Activated T-helper 1 cell treated with anti-CD3 and anti-CD28 coated beads, Interleukin-12 subunit alpha, Interleukin-12 subunit beta, Interleukin-2, Interleukin-4 antibody, amounts not matched to agents 30 ng/mL and 10 ng/mL and 1 ng/mL, durations not matched to agents 14 hours and 24 hours and 36 hours (primary cell): ENCODE measurements at regions of chr12 and their contacts with region 1.

Region 1: GRCh38 chr12:105330283-105330930 is at the start of gene C12orf75:
- DNase-seq: peak; percentile 93
- H3K4me3 Mint-ChIP-seq: peak within 1 kb of the TSS; percentile 87
- H3K27ac Mint-ChIP-seq: peak within 1 kb of the TSS; percentile 91
- H3K4me1 Mint-ChIP-seq: peaks cover 83% of the 10 kb centered on the region
- H3K27me3 Mint-ChIP-seq: no peaks in the 10 kb centered on the region
- total RNA-seq, gene C12orf75: 87.8 and 93.4 TPM in 2 replicates

Region 2: DNA sequence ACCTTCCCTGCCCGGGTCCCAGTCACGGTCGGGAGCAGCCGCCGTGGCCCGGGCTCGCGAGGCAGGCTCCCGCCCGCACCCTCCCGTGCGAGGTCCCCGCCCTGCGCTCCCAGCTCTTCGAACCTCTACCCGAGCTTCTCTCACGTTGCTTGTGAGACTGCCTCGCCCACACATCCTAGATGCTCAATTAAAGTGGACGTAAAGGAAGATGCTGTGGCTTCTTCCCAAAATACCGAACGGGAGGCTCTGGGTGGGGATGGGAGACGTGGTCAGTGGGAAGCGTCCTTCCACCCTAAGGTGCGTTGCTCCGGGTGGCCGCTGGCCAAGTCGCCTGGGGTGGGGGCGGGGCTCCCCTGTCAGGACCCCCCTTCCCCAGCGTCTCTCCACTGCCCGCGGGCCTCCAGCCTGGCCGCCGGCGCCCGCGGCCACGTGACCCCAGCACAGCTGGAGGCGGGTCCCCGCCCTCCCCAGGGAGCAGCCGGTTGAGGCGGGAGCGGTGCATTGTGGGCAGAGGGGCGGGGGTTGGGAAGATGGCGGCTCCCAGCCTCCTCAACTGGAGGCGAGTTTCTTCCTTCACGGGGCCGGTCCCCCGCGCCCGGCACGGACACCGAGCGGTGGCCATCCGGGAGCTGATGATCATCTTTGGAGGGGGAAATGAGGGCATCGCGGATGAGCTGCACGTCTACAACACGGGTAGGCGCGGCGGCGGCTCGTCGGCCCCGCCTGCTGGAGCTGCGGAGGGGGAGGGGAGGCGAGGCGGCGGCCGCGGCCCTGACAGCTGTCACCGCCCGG is 1266.2 kb before region 1 on chr12 and contains the start of gene HCFC2:
- intact Hi-C with region 1: loop called (anchors 2 kb)
- DNase-seq: peak; percentile 88
- H3K4me3 Mint-ChIP-seq: peak within 1 kb of the TSS; percentile 95
- H3K27ac Mint-ChIP-seq: peak within 1 kb of the TSS; percentile 86
- H3K4me1 Mint-ChIP-seq: peaks cover 36% of the 10 kb centered on the region
- H3K27me3 Mint-ChIP-seq: peaks cover 24% of the 10 kb centered on the region
- total RNA-seq, gene HCFC2: 8.5 and 8.9 TPM in 2 replicates

Region 3: DNA sequence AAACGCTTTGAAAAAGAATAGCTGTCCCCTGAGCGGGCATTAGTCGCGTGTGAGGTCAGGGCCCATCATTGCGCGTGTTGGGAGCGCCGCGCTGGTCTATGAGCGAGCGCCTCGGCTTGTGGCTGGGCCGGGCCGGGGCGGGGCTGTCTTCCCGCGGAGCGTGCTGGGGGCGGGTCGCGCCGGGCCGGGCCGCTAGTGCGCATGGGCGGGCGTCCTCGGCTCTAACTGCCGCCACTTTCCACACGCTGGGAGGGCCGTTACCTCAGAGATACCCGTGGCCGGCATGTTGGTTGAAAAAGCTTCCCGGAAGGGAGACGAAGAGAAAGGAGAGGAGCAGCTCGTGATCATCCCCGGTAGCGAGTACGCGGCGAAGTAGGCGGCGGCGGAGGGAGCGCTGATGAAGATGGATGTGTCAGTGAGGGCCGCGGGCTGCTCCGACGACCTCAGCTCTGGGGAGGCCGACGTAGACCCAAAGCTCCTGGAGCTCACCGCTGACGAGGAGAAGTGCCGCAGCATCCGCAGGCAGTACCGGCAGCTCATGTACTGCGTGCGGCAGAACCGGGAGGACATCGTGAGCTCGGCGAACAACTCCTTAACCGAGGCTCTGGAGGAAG is 1026.8 kb before region 1 on chr12 and contains the start of gene EID3:
- intact Hi-C with region 1: loop called (anchors 5 kb)
- DNase-seq: peak; percentile 92
- H3K4me3 Mint-ChIP-seq: peak within 1 kb of the TSS; percentile 93
- H3K27ac Mint-ChIP-seq: peak within 1 kb of the TSS; percentile 99
- H3K4me1 Mint-ChIP-seq: peaks cover 66% of the 10 kb centered on the region
- H3K27me3 Mint-ChIP-seq: no peaks in the 10 kb centered on the region
- total RNA-seq, gene EID3: 10.5 and 10.6 TPM in 2 replicates

Region 4: GRCh38 chr12:105279460-105280056 is 50.8 kb before region 1 on chr12:
- intact Hi-C with region 1: loop called (anchors 1 kb)
- DNase-seq: peak; percentile 21
- H3K4me3 Mint-ChIP-seq: no peak overlapping the region
- H3K27ac Mint-ChIP-seq: no peak overlapping the region
- H3K4me1 Mint-ChIP-seq: no peaks in the 10 kb centered on the region
- H3K27me3 Mint-ChIP-seq: peaks cover 15% of the 10 kb centered on the region

Region 5: DNA sequence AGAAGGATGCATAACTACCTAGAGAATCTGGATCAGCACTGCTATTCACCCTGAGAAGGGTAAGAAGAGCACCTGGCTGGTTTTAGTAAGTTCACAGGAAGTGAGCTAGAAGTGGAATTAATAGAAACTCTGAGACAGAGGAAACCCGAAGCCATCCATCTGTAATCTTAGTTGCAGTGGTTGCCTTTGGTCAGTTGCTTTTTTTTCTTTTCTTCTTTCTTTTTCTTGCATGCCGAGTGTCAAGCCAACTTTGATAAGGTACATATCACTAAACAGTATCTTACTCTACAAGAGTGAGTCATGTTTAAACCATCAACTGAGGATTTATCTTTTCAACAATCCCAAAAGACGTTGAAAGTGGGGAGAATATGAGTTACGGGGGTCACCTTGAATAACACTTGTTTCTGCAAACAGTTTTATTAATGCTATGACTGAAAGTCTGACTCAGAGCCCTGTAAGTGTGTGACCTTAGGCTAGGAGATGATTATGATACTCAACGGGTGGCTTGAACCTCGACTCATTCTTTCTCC is 26.8 kb after region 1 on chr12:
- intact Hi-C with region 1: loop called (anchors 2 kb)
- DNase-seq: no peak
- H3K4me3 Mint-ChIP-seq: no peak overlapping the region
- H3K27ac Mint-ChIP-seq: peak overlapping the region; percentile 91
- H3K4me1 Mint-ChIP-seq: peaks cover 34% of the 10 kb centered on the region
- H3K27me3 Mint-ChIP-seq: no peaks in the 10 kb centered on the region

Region 6: GRCh38 chr12:105600911-105601545 is 270.6 kb after region 1 on chr12:
- intact Hi-C with region 1: no loop called
- DNase-seq: no peak
- H3K4me3 Mint-ChIP-seq: no peak overlapping the region
- H3K27ac Mint-ChIP-seq: no peak overlapping the region
- H3K4me1 Mint-ChIP-seq: no peaks in the 10 kb centered on the region
- H3K27me3 Mint-ChIP-seq: peaks cover 2% of the 10 kb centered on the region